Activated CD4-positive, alpha-beta memory T cell treated with anti-CD3 and anti-CD28 coated beads for 36 hours (primary cell): ENCODE measurements at regions of chr12 and their contacts with region 1.

Region 1: GRCh38 chr12:109995686-109996482 is at the start of gene GIT2:
- DNase-seq: peak; percentile 97
- H3K4me3 Mint-ChIP-seq: peak within 1 kb of the TSS; percentile 96
- H3K27ac Mint-ChIP-seq: peak within 1 kb of the TSS; percentile 95
- H3K4me1 Mint-ChIP-seq: peaks cover 54% of the 10 kb centered on the region
- H3K27me3 Mint-ChIP-seq: no peaks in the 10 kb centered on the region
- total RNA-seq, gene GIT2: 52.1 to 56.7 TPM

Region 2: DNA sequence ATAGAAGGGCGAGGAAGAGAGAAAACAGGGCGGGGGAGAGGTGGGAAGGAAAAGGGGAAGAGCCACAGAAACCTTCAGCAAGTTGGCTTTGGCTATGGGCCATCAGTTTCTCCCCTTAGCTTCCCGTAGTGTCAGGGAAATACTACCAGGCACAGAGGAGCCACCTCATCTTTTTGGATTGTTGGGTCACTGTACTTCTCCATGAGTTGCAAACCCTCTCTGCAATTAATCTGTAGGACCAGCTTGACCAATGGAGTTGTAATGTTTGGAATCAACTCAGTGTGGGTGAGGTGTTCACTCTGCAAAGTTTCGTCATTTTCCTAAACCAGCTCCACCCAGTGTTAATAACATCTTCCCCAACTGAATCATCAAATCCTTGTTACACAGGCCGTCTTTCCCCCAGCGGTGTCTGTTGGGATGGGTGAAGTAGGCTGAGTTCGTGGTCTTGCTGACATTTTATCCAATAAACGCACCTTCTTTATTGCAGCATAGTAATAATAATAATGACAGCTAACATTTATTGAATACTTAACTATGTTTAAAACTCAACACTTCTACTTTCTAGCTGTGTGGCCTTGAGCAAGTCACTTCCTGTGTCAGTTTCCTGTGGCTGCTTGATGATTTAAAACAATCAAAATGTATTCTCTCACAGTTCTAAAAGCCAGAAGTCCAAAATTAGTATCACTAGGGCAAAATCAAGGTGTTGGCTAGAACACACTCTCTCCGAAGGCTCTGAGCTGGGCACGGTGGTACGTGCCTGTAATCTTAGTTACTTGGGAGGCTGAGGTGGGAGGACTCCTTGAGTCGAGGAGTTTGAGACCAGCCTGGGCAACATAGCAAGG is 107.5 kb before region 1 on chr12:
- CTCF ChIA-PET with region 1: no interaction called
- POLR2A ChIA-PET with region 1: no interaction called
- intact Hi-C with region 1: loop called (anchors 5 kb)
- DNase-seq: peak; percentile 66
- H3K4me3 Mint-ChIP-seq: peak overlapping the region; percentile 27
- H3K27ac Mint-ChIP-seq: peak overlapping the region; percentile 94
- H3K4me1 Mint-ChIP-seq: peaks cover 38% of the 10 kb centered on the region
- H3K27me3 Mint-ChIP-seq: no peaks in the 10 kb centered on the region

Region 3: GRCh38 chr12:109899783-109900751 is 95.8 kb before region 1 on chr12 and contains the start of gene TCHP:
- CTCF ChIA-PET with region 1: interaction called, 3 read pairs
- POLR2A ChIA-PET with region 1: interaction called, 3 read pairs
- intact Hi-C with region 1: loop called (anchors 1 kb)
- DNase-seq: peak; percentile 85
- H3K4me3 Mint-ChIP-seq: peak within 1 kb of the TSS; percentile 81
- H3K27ac Mint-ChIP-seq: peak within 1 kb of the TSS; percentile 86
- H3K4me1 Mint-ChIP-seq: peaks cover 22% of the 10 kb centered on the region
- H3K27me3 Mint-ChIP-seq: no peaks in the 10 kb centered on the region
- total RNA-seq, gene TCHP: 21.2 to 21.3 TPM

Region 4: GRCh38 chr12:109982210-109982609 is 13.7 kb before region 1 on chr12:
- CTCF ChIA-PET with region 1: interaction called, 4 read pairs
- POLR2A ChIA-PET with region 1: interaction called, 4 read pairs
- intact Hi-C with region 1: loop called (anchors 1 kb)
- DNase-seq: no peak
- H3K4me3 Mint-ChIP-seq: no peak overlapping the region
- H3K27ac Mint-ChIP-seq: peak overlapping the region; percentile 78
- H3K4me1 Mint-ChIP-seq: peaks cover 60% of the 10 kb centered on the region
- H3K27me3 Mint-ChIP-seq: no peaks in the 10 kb centered on the region

Region 5: DNA sequence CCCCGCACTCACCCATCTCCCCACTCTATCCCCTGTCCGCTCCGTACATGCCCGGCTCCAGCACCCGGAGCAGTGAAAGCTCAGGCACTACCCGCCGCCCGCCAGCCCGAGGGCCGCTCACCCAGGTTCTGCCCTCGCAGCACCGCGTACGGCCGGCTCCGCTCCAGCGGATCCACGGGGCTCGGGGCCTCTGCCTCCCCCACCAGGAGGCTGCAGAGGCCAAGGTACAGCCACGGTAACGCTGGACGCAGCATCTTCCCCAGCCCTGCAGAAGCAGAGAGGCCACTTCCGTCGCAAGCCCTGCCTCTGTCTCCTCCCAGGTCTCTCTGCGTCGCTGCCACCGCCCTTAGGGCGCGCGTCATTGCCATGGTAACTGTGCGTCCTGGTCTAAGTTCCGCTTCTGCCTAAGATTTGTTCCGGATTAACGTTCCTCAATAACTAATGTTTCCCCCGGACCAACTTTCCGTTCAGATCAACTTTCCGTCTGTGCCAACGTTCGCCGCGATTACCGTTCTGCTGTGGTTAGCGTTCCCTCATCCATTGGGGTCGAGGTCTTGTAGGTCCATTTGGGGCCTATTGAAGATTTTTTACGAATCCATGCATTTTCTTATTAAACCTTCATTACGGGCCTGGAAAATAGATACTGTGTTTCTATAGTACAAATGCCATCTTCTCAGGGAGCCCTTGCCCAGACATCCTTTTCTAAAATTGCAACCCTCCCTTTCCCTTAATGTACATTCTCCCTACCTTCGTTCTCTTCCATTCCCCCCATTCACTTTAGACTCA is 52.6 kb after region 1 on chr12 and contains the start of gene C12orf76:
- CTCF ChIA-PET with region 1: no interaction called
- POLR2A ChIA-PET with region 1: no interaction called
- intact Hi-C with region 1: loop called (anchors 2 kb)
- DNase-seq: peak; percentile 95
- H3K4me3 Mint-ChIP-seq: peak within 1 kb of the TSS; percentile 89
- H3K27ac Mint-ChIP-seq: peak within 1 kb of the TSS; percentile 94
- H3K4me1 Mint-ChIP-seq: peaks cover 38% of the 10 kb centered on the region
- H3K27me3 Mint-ChIP-seq: no peaks in the 10 kb centered on the region
- total RNA-seq, gene C12orf76: 14.2 to 17.1 TPM

Region 6: DNA sequence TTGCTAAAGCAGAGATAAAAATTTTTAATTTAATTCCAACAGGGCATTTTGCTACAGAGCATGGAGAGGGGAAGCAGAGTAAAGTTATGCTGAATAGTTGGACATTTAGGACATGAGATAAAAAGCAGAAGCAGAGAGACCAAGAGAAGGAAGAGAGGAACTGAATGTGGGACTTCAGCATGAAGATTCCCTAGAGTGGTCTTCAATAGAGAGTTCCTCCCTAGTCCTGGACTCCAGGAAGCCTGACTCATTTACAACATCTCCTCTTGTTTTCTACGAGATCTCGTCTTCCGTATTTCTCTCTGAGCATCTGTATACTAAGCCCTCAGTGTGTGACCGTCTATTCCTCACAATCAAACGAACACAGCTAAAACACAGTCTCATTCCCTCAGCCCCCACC is 93.1 kb after region 1 on chr12:
- CTCF ChIA-PET with region 1: no interaction called
- POLR2A ChIA-PET with region 1: no interaction called
- intact Hi-C with region 1: no loop called
- DNase-seq: no peak
- H3K4me3 Mint-ChIP-seq: no peak overlapping the region
- H3K27ac Mint-ChIP-seq: no peak overlapping the region
- H3K4me1 Mint-ChIP-seq: no peaks in the 10 kb centered on the region
- H3K27me3 Mint-ChIP-seq: peaks cover 8% of the 10 kb centered on the region

Region 7: DNA sequence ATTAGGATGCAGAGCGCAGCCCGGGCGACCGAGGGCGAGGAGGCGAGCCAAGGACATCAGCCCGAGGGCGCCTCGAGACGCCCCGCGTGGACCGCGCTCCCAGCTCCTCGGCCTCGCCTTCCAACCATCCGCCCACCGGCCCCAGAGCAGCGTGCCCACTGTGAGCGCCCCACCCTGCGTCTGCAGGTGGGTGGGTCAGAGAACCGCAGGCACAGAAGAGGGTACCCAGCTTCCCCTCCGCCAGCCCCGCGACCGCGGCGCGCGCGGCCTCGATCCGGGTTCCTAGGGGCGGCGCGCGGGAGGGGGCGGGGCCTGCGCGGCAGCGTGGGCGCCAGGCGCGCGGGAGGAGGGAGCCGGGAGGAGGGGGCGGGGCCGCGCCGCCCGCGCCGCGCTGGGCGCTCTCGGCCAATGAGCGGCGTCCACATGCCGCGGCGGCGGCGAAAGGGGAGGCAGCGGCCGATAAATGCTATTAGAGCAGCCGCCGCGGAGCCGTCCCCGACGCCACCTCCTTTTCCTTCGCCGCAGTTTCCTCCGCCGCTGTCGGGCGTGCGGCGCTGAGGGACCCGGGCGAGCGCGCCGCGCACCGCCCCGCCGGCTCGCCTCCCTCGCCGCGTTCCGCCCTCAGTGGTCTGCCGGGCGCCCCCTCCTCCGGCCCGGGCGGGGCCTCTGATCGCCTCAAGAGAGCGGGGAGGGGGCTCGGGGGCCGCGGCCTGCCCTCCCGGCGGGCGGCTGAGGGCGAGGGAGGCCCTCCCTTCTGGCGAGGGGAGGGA is 285.1 kb after region 1 on chr12 and contains the start of gene ATP2A2:
- CTCF ChIA-PET with region 1: no interaction called
- POLR2A ChIA-PET with region 1: no interaction called
- intact Hi-C with region 1: loop called (anchors 10 kb)
- DNase-seq: peak; percentile 92
- H3K4me3 Mint-ChIP-seq: peak within 1 kb of the TSS; percentile 90
- H3K27ac Mint-ChIP-seq: peak within 1 kb of the TSS; percentile 87
- H3K4me1 Mint-ChIP-seq: peaks cover 35% of the 10 kb centered on the region
- H3K27me3 Mint-ChIP-seq: no peaks in the 10 kb centered on the region
- total RNA-seq, gene ATP2A2: 144 to 152 TPM

Region 8: GRCh38 chr12:110583137-110584059 is 587.5 kb after region 1 on chr12 and contains the start of gene PPTC7:
- CTCF ChIA-PET with region 1: interaction called, 3 read pairs
- POLR2A ChIA-PET with region 1: no interaction called
- intact Hi-C with region 1: loop called (anchors 10 kb)
- DNase-seq: peak; percentile 99
- H3K4me3 Mint-ChIP-seq: peak within 1 kb of the TSS; percentile 94
- H3K27ac Mint-ChIP-seq: peak within 1 kb of the TSS; percentile 94
- H3K4me1 Mint-ChIP-seq: peaks cover 59% of the 10 kb centered on the region
- H3K27me3 Mint-ChIP-seq: no peaks in the 10 kb centered on the region
- total RNA-seq, gene PPTC7: 36.9 to 37.0 TPM